Transverse colon (tissue), 4 donors: ENCODE measurements at regions of chr1 and their contacts with region 1.

Region 1: GRCh38 chr1:15430787-15431570 is 7.3 kb upstream of the CTRC start:
- DNase-seq: peak; percentile 83
- H3K4me3 ChIP-seq: no peak overlapping the region
- H3K27ac ChIP-seq: peak overlapping the region in 3 of 4 donors; percentile 37 to 52 (median 41)
- H3K4me1 ChIP-seq: peaks cover 16 to 42% (median 22%) of the 10 kb centered on the region in 4 donors
- H3K27me3 ChIP-seq: no peaks in the 10 kb centered on the region
- CTCF ChIP-seq: peak; percentile 96 to 98 (median 97)
- EP300 ChIP-seq: no peak
- POLR2A ChIP-seq: peak; percentile 25

Region 2: GRCh38 chr1:15128520-15129313 is 302.3 kb before region 1 on chr1:
- in situ Hi-C with region 1: loop called in 3 of 4 experiments (anchors 25 kb)
- intact Hi-C with region 1: loop called (anchors 10 kb)
- DNase-seq: peak; percentile 81
- H3K4me3 ChIP-seq: no peak overlapping the region
- H3K27ac ChIP-seq: no peak overlapping the region
- H3K4me1 ChIP-seq: no peaks in the 10 kb centered on the region
- H3K27me3 ChIP-seq: no peaks in the 10 kb centered on the region
- CTCF ChIP-seq: peak; percentile 88 to 93 (median 91)
- EP300 ChIP-seq: no peak
- POLR2A ChIP-seq: no peak

Region 3: GRCh38 chr1:15323351-15323988 is 107.5 kb before region 1 on chr1:
- in situ Hi-C with region 1: loop called in 2 of 4 experiments (anchors 5 kb)
- intact Hi-C with region 1: loop called (anchors 1 kb)
- DNase-seq: peak; percentile 82
- H3K4me3 ChIP-seq: peak overlapping the region in 1 of 4 donors; percentile 18
- H3K27ac ChIP-seq: peak overlapping the region; percentile 34 to 83 (median 67)
- H3K4me1 ChIP-seq: peaks cover 10 to 29% (median 17%) of the 10 kb centered on the region in 4 donors
- H3K27me3 ChIP-seq: no peaks in the 10 kb centered on the region
- CTCF ChIP-seq: peak; percentile 98 to 99 (median 98)
- EP300 ChIP-seq: no peak
- POLR2A ChIP-seq: no peak

Region 4: DNA sequence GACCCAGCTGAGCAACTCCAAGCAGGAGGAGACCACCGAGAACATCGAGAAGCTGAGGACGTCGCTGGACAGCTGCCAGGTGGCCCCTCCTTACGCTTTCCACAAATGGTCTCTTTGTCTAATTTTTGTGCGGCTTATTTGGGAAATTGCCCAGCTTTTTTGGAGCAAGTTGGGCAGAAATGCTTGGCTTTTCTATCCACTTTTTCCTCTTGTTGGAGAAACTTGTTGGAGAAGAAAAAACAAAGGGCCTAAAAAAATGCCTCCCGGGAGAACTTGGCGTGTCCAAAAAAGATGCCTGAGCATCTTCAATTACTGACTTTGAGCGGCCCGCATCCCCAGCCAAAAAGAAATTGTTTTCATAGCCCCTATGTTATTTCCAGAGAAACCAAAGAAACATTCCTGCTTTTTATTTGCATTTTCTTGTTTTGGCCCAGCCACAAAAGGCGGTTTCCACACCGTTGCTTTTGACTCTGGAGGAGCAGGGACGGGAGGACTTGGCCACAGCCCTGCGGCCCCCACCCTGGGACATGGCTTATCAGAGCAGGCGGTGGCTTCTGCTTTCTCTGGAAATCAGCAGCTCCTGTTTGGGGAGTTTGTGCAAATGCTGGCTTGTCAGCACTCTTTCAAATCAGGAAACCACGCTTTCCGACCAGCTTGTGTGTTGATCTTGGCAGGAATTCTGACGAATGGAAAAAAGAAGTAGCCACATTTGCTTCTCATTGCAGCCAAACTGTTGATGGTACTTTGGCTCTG is 102.5 kb before region 1 on chr1:
- in situ Hi-C with region 1: loop called in 3 of 4 experiments (anchors 5 to 10 kb)
- intact Hi-C with region 1: loop called (anchors 1 kb)
- DNase-seq: no peak
- H3K4me3 ChIP-seq: peak overlapping the region in 1 of 4 donors; percentile 5
- H3K27ac ChIP-seq: peak overlapping the region; percentile 15 to 41 (median 33)
- H3K4me1 ChIP-seq: peaks cover 14 to 42% (median 22%) of the 10 kb centered on the region in 4 donors
- H3K27me3 ChIP-seq: no peaks in the 10 kb centered on the region
- CTCF ChIP-seq: no peak
- EP300 ChIP-seq: no peak
- POLR2A ChIP-seq: no peak

Region 5: GRCh38 chr1:15337656-15338402 is 93.2 kb before region 1 on chr1:
- in situ Hi-C with region 1: loop called in 2 of 4 experiments (anchors 5 to 10 kb)
- intact Hi-C with region 1: no loop called
- DNase-seq: no peak
- H3K4me3 ChIP-seq: no peak overlapping the region
- H3K27ac ChIP-seq: peak overlapping the region; percentile 19 to 78 (median 38)
- H3K4me1 ChIP-seq: peaks cover 10 to 55% (median 26%) of the 10 kb centered on the region in 4 donors
- H3K27me3 ChIP-seq: no peaks in the 10 kb centered on the region
- CTCF ChIP-seq: no peak
- EP300 ChIP-seq: no peak
- POLR2A ChIP-seq: no peak